Activated B cell treated with CpG ODN at 0.5 μM for 24 hours (primary cell): ENCODE measurements at regions of chr11 and their contacts with region 1.

Region 1: DNA sequence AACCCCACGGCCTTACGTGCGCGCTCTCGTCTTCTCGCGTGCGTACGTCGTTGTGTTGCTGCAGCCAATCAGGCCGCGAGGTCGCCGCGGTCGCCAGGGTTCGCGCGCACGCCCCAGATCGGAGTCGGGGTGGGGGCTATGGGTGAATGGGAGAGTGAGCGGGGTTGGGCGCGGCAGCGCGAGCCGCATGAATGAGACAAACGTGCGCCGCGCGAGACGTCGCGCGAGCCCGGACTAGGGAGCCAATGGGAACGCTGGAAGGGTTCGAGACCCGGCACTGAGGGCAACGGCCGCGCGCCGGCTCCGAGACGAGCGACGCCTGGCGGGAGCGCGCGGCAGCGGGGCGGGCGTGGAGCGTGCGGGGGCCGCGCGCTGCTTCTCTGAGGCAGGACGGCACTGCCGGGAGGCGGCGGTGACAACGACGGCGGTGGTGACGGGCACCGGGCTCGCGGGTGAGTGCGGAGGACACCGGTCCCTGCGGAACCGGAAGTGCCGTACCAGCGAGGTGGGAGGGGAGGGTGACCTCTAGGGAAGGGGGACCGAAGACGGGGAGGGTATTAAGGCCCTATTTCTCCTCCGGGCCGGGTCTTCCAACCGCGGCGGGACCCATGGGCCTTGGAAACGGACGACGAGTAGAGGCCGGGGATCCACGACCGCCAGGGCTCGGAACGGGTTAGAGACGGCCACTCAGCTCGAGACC is at the start of gene ZDHHC5:
- DNase-seq: peak; percentile 97
- ATAC-seq: peak; percentile 80
- H3K4me3 Mint-ChIP-seq: peak within 1 kb of the TSS; percentile 89
- H3K27ac Mint-ChIP-seq: peak within 1 kb of the TSS; percentile 99
- H3K4me1 Mint-ChIP-seq: peaks cover 49% of the 10 kb centered on the region
- H3K27me3 Mint-ChIP-seq: no peaks in the 10 kb centered on the region
- CTCF ChIP-seq: no peak
- total RNA-seq, gene ZDHHC5: 50.9 and 60.7 TPM in 2 replicates

Region 2: GRCh38 chr11:57015679-57016078 is 652.2 kb before region 1 on chr11:
- CTCF ChIA-PET with region 1: no interaction called
- POLR2A ChIA-PET with region 1: no interaction called
- intact Hi-C with region 1: no loop called
- DNase-seq: no peak
- ATAC-seq: no peak
- H3K4me3 Mint-ChIP-seq: no peak overlapping the region
- H3K27ac Mint-ChIP-seq: no peak overlapping the region
- H3K4me1 Mint-ChIP-seq: no peaks in the 10 kb centered on the region
- H3K27me3 Mint-ChIP-seq: no peaks in the 10 kb centered on the region
- CTCF ChIP-seq: no peak

Region 3: DNA sequence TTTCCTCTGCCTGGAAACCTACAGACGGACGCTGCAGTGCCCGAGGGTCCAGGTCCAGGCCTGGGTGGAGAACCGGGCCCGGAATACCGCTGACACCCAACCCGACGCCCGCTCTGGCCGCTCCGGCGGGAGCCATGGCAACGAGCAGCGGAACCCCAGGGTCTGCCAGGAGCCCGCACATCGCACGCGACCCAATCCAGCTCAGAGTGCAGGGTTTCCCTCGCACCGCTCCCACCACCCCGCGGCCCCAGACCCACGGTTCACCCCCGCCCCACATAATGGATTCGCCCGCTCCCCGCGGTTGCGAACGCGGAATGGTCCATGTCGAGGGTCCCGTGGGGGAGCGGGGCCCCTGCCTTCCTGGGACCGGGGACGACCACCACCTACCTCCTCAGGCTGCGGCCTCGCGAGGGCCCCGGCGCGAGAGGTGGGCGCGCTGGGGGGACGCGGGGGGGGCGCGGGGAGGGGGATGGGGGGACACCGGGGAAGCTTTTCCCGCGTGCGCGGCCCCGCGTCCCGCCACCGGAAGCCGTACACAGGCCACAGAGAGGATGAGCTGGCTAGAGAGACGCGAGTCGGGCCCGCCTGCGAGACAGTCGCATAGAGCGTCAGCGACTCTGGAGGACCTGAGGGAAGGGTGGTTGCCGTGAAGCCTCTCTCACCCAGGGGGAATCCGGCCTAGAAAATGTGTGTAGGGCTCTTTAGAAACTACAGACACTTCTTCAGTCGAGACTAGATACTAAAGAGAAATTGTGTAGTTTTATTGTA is 332.4 kb before region 1 on chr11 and contains the start of gene SSRP1:
- CTCF ChIA-PET with region 1: no interaction called
- POLR2A ChIA-PET with region 1: interaction called, 4 read pairs
- intact Hi-C with region 1: loop called (anchors 1 kb)
- DNase-seq: peak; percentile 77
- ATAC-seq: peak; percentile 97
- H3K4me3 Mint-ChIP-seq: peak within 1 kb of the TSS; percentile 94
- H3K27ac Mint-ChIP-seq: peak within 1 kb of the TSS; percentile 98
- H3K4me1 Mint-ChIP-seq: peaks cover 27% of the 10 kb centered on the region
- H3K27me3 Mint-ChIP-seq: peaks cover 2% of the 10 kb centered on the region
- CTCF ChIP-seq: no peak
- total RNA-seq, gene SSRP1: 120 and 127 TPM in 2 replicates

Region 4: GRCh38 chr11:57680552-57680874 is 12.6 kb after region 1 on chr11:
- CTCF ChIA-PET with region 1: interaction called, 3 read pairs
- POLR2A ChIA-PET with region 1: interaction called, 4 read pairs
- intact Hi-C with region 1: loop called (anchors 2 kb)
- DNase-seq: no peak
- ATAC-seq: no peak
- H3K4me3 Mint-ChIP-seq: no peak overlapping the region
- H3K27ac Mint-ChIP-seq: no peak overlapping the region
- H3K4me1 Mint-ChIP-seq: peaks cover 18% of the 10 kb centered on the region
- H3K27me3 Mint-ChIP-seq: no peaks in the 10 kb centered on the region
- CTCF ChIP-seq: no peak

Region 5: DNA sequence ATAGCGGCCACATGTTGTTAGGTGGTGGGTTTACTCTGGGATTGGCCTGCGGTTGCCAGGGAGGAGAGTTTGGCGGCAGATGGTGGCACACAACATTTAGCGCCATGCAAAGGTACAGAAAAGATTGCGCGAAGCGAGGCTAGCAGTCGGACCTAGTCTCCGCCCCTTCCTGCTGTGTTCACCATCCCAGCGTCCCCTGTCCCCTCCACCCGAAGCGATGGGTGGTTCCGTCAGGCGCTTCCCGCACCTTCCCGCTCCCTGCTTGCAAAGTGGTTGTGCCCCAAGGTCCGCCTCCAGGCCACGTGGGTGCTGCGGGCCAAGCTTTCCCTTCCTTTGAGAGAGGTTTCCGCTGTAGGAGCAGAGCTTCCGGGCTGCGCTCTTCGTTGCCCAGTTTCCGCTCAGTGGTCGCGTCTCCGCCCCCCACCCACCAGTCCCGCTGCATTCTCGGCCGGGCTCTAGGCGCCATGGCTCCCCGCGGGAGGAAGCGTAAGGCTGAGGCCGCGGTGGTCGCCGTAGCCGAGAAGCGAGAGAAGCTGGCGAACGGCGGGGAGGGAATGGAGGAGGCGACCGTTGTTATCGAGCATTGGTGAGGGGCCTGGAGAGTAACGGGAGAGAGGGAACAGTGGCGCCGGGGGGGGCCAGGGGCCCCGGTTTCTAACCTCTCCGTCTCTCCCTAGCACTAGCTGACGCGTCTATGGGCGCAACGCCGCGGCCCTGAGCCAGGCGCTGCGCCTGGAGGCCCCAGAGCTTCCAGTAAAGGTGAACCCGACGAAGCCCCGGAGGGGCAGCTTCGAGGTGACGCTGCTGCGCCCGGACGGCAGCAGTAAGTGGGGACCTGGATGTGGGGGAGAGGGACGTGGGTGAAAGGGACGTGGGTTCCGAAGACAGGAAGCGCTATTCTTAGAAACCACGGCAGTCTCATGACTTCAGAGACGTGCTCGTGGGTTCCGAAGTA is 73.5 kb after region 1 on chr11 and contains the start of gene SELENOH:
- CTCF ChIA-PET with region 1: no interaction called
- POLR2A ChIA-PET with region 1: interaction called, 15 read pairs
- intact Hi-C with region 1: loop called (anchors 1 kb)
- DNase-seq: peak; percentile 84
- ATAC-seq: peak; percentile 90
- H3K4me3 Mint-ChIP-seq: peak within 1 kb of the TSS; percentile 96
- H3K27ac Mint-ChIP-seq: peak within 1 kb of the TSS; percentile 98
- H3K4me1 Mint-ChIP-seq: peaks cover 30% of the 10 kb centered on the region
- H3K27me3 Mint-ChIP-seq: no peaks in the 10 kb centered on the region
- CTCF ChIP-seq: no peak
- total RNA-seq, gene SELENOH: 210 and 224 TPM in 2 replicates

Region 6: GRCh38 chr11:58524232-58525036 is 856.5 kb after region 1 on chr11:
- CTCF ChIA-PET with region 1: no interaction called
- POLR2A ChIA-PET with region 1: no interaction called
- intact Hi-C with region 1: loop called (anchors 2 kb)
- DNase-seq: no peak
- ATAC-seq: peak; percentile 18
- H3K4me3 Mint-ChIP-seq: peak overlapping the region; percentile 64
- H3K27ac Mint-ChIP-seq: peak overlapping the region; percentile 87
- H3K4me1 Mint-ChIP-seq: peaks cover 43% of the 10 kb centered on the region
- H3K27me3 Mint-ChIP-seq: no peaks in the 10 kb centered on the region
- CTCF ChIP-seq: no peak

Region 7: DNA sequence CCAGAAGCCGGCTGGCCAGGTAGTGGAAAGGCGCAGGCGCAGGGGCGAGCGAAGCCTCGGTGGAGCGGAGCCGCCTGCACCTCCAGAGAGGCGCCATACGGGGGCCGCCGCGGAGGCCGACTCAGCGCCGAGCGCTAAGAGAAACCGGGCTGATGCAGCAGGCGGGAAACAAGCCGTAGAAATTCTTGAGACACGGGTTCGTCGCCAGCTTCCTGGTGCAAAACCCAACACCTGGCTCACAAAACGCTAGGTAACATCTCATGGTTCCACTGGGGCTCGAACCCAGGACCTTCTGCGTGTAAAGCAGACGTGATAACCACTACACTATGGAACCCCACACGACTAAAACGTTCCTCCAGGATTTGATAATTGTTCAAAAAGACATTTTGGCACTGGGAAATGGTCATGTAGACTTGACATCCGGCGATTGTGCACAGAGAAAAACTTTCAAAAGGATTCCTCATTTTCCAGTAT is 1882.5 kb after region 1 on chr11:
- CTCF ChIA-PET with region 1: no interaction called
- POLR2A ChIA-PET with region 1: no interaction called
- intact Hi-C with region 1: loop called (anchors 10 kb)
- DNase-seq: peak; percentile 75
- ATAC-seq: peak; percentile 91
- H3K4me3 Mint-ChIP-seq: peak overlapping the region; percentile 87
- H3K27ac Mint-ChIP-seq: peak overlapping the region; percentile 94
- H3K4me1 Mint-ChIP-seq: peaks cover 31% of the 10 kb centered on the region
- H3K27me3 Mint-ChIP-seq: no peaks in the 10 kb centered on the region
- CTCF ChIP-seq: peak; percentile 43